Left cardiac atrium (tissue), 4 donors: ENCODE measurements at regions of chr5 and their contacts with region 1.

Region 1: GRCh38 chr5:5141625-5142532 is 1.7 kb downstream of the ADAMTS16 start:
- DNase-seq: peak; percentile 44
- ATAC-seq: peak in 1 of 2 donors; percentile 46

Region 2: GRCh38 chr5:4879693-4880303 is 262.1 kb before region 1 on chr5:
- intact Hi-C with region 1: loop called in 1 of 2 experiments (anchors 10 kb)
- DNase-seq: peak; percentile 72
- ATAC-seq: peak; percentile 65 to 74

Region 3: GRCh38 chr5:5398046-5398445 is 256.2 kb after region 1 on chr5:
- intact Hi-C with region 1: loop called (anchors 5 kb)
- DNase-seq: no peak
- ATAC-seq: no peak

Region 4: DNA sequence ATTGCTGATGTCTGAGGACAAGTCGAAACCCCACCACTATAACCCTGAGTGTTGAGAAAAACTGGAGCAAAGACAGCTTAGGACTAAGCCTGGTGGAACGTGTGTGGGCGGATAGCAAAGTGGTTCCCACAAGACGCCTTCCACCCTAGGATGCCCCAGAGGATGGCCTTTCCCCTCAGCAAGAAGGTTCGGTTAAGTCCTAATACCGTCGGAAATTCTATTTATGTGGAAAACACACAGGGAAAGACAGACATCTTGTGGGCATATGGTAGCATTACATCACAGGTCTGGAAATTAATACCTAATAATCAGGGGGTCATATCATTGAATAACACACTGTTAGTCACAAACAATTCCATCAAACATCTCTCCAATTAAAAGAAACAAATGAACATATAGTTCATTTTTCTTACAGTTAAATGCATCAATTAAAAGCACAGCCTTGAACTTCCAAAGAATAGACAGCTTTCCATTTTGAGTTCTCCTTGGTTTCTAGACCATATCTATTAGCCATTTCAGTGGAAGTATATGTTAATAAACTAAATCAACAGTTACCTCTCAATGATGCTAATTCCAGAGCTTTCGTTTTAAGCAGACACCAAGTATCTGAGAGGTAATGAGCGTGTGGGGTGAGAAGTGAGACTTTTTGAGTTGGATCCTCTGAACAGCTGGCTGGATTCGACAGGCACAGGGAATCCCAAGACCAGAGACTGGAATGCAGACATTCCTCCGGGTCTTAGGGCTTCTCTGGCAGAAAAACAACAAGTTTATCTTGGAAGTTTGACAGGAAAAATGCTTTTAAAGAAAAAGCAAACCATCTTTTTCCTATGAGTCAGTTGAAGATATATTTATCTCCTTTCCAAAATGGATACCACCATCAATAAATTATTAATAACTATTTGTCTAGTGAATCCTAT is 277.7 kb after region 1 on chr5:
- intact Hi-C with region 1: loop called (anchors 1 to 2 kb)
- DNase-seq: no peak
- ATAC-seq: no peak